Activated CD8-positive, alpha-beta T cell treated with anti-CD3 and anti-CD28 coated beads for 36 hours (primary cell): ENCODE measurements at regions of chr6 and their contacts with region 1.

Region 1: GRCh38 chr6:131532580-131533039 is 40.4 kb upstream of the ARG1 start:
- DNase-seq: peak; percentile 82
- ATAC-seq: peak; percentile 91
- H3K4me3 Mint-ChIP-seq: no peak overlapping the region
- H3K27ac Mint-ChIP-seq: peak overlapping the region; percentile 80
- H3K4me1 Mint-ChIP-seq: peaks cover 49% of the 10 kb centered on the region
- H3K27me3 Mint-ChIP-seq: no peaks in the 10 kb centered on the region
- CTCF ChIP-seq: no peak

Region 2: DNA sequence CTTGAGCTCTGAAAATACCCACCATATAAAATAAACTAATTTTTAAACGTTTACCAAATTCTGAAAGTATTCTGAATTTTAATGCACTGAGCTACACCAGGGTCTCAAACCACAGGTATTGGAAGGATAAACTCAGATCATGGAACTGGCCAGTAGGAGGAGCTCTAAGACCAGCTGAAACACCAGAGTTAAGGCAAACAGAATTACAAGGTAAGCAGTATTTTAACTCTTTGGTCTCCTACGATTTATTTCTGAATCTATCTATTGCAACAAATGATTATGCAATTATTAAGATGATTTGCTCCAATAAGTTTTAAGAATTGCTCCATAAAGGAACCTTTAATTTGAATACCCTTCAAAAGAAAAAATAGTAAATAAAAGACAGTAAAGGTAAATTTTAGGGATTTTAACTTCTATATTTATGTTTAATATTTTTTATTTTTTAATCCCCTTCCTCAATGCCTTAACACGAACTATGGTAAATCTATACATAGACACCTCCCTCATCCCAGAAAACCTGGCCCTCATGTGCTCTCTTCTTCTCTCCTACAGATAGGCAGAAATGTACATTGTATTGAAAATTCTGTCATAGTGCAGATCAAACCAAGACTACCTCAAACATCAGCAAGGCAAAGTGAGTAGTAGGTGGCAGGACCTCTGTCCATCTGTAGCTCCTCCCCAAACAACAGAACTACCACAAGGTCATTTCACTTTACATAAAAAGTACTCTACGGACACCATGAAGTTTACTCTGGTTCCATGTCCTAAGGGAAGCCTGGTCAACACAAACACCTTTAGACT is 647.0 kb before region 1 on chr6:
- CTCF ChIA-PET with region 1: interaction called, 19 read pairs
- POLR2A ChIA-PET with region 1: no interaction called
- intact Hi-C with region 1: loop called (anchors 5 kb)
- DNase-seq: peak; percentile 82
- ATAC-seq: peak; percentile 77
- H3K4me3 Mint-ChIP-seq: no peak overlapping the region
- H3K27ac Mint-ChIP-seq: no peak overlapping the region
- H3K4me1 Mint-ChIP-seq: no peaks in the 10 kb centered on the region
- H3K27me3 Mint-ChIP-seq: no peaks in the 10 kb centered on the region
- CTCF ChIP-seq: peak; percentile 96

Region 3: GRCh38 chr6:131116749-131117360 is 415.8 kb before region 1 on chr6:
- CTCF ChIA-PET with region 1: interaction called, 13 read pairs
- POLR2A ChIA-PET with region 1: no interaction called
- intact Hi-C with region 1: no loop called
- DNase-seq: no peak
- ATAC-seq: no peak
- H3K4me3 Mint-ChIP-seq: no peak overlapping the region
- H3K27ac Mint-ChIP-seq: no peak overlapping the region
- H3K4me1 Mint-ChIP-seq: no peaks in the 10 kb centered on the region
- H3K27me3 Mint-ChIP-seq: peaks cover 1% of the 10 kb centered on the region
- CTCF ChIP-seq: peak; percentile 72

Region 4: DNA sequence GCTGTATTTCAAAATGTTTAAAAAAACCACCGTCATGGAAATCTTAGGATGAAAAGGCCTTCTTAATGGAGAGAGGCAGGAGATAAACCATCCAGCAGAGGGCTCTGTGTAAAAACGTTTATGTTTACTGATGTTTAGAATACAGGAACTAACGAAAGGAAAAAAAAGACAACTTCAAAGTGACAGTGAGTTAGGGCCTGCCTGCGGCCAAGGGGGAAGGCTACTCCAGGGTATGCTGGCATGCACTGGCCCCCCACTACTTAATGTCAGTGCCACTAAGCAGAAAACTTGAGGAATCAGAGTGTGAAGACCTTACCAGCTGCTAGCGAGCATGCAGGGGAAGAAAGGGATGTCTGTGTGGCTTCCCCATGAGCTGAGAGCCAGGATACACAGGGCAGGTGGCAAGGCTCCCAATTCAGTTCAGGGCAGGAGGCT is 349.6 kb before region 1 on chr6:
- CTCF ChIA-PET with region 1: interaction called, 42 read pairs
- POLR2A ChIA-PET with region 1: interaction called, 3 read pairs
- intact Hi-C with region 1: loop called (anchors 1 kb)
- DNase-seq: peak; percentile 33
- ATAC-seq: peak; percentile 66
- H3K4me3 Mint-ChIP-seq: no peak overlapping the region
- H3K27ac Mint-ChIP-seq: peak overlapping the region; percentile 55
- H3K4me1 Mint-ChIP-seq: peaks cover 9% of the 10 kb centered on the region
- H3K27me3 Mint-ChIP-seq: no peaks in the 10 kb centered on the region
- CTCF ChIP-seq: peak; percentile 58

Region 5: GRCh38 chr6:131199568-131200272 is 332.9 kb before region 1 on chr6:
- CTCF ChIA-PET with region 1: interaction called, 86 read pairs
- POLR2A ChIA-PET with region 1: interaction called, 5 read pairs
- intact Hi-C with region 1: loop called (anchors 1 kb)
- DNase-seq: peak; percentile 85
- ATAC-seq: peak; percentile 98
- H3K4me3 Mint-ChIP-seq: peak overlapping the region; percentile 76
- H3K27ac Mint-ChIP-seq: peak overlapping the region; percentile 95
- H3K4me1 Mint-ChIP-seq: peaks cover 54% of the 10 kb centered on the region
- H3K27me3 Mint-ChIP-seq: no peaks in the 10 kb centered on the region
- CTCF ChIP-seq: peak; percentile 79

Region 6: GRCh38 chr6:131205481-131206244 is 326.9 kb before region 1 on chr6:
- CTCF ChIA-PET with region 1: interaction called, 86 read pairs
- POLR2A ChIA-PET with region 1: no interaction called
- intact Hi-C with region 1: no loop called
- DNase-seq: no peak
- ATAC-seq: no peak
- H3K4me3 Mint-ChIP-seq: no peak overlapping the region
- H3K27ac Mint-ChIP-seq: peak overlapping the region; percentile 32
- H3K4me1 Mint-ChIP-seq: peaks cover 50% of the 10 kb centered on the region
- H3K27me3 Mint-ChIP-seq: no peaks in the 10 kb centered on the region
- CTCF ChIP-seq: no peak

Region 7: GRCh38 chr6:131451321-131452144 is 81.1 kb before region 1 on chr6:
- CTCF ChIA-PET with region 1: no interaction called
- POLR2A ChIA-PET with region 1: no interaction called
- intact Hi-C with region 1: no loop called
- DNase-seq: peak; percentile 37
- ATAC-seq: peak; percentile 90
- H3K4me3 Mint-ChIP-seq: no peak overlapping the region
- H3K27ac Mint-ChIP-seq: peak overlapping the region; percentile 89
- H3K4me1 Mint-ChIP-seq: peaks cover 25% of the 10 kb centered on the region
- H3K27me3 Mint-ChIP-seq: no peaks in the 10 kb centered on the region
- CTCF ChIP-seq: no peak

Region 8: DNA sequence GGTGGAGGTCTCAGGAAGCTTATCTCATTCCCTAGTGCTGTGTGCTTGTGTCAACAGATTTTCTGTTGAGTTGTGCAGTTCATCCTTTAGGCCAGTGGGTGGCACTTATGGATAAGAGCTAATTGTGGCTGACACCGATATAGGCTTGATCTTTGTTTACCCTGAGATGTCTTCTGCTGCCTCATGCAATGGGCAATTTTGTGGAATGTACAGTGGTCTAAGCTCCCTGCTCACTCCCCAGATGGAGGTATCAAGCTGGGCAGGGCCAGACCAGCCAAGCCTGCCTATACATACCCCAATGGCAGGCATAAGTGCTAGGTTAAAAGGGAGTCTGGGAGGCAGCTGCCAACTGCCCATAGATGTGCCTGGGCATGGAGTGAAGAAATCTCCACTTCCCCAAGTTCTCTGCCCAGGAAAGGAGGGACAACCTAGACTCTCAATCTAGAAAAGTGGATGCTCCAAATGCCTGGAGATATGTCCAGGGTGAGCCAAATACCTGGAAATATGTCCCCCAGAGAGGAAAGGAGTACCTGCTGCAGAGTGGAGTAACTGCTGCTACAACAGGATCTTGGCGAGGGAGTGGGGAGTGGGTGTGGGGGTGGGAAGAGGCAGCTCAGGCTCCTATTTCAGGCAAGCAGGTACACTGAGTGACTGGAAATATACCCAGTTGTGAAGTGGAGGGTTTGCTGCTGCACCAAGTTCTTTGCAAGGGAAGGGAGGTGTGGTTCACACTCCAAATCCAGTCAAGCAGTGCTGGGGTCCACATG is 12.8 kb before region 1 on chr6:
- CTCF ChIA-PET with region 1: interaction called, 83 read pairs
- POLR2A ChIA-PET with region 1: interaction called, 5 read pairs
- intact Hi-C with region 1: loop called (anchors 1 kb)
- DNase-seq: peak; percentile 72
- ATAC-seq: peak; percentile 99
- H3K4me3 Mint-ChIP-seq: no peak overlapping the region
- H3K27ac Mint-ChIP-seq: no peak overlapping the region
- H3K4me1 Mint-ChIP-seq: peaks cover 16% of the 10 kb centered on the region
- H3K27me3 Mint-ChIP-seq: no peaks in the 10 kb centered on the region
- CTCF ChIP-seq: peak; percentile 61

Region 9: DNA sequence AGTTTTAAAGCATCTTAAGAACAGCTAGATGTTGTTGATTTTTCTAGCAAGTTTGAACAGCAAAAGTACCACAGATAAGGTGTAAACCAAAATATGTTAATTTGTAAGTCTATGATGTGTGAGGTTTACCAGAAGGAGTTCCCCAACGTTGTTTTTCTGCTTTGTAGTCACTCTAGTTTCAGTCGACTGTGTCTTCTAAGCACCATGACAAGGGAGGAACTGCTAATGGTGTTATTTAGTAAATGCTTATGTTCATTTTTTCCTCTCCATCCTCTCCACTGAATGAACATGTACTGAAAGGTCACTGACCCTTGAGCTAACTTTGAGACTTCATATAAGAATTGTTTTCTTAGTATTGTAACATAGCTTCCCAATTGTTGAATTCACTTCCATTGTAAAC is 107.5 kb after region 1 on chr6:
- CTCF ChIA-PET with region 1: no interaction called
- POLR2A ChIA-PET with region 1: no interaction called
- intact Hi-C with region 1: no loop called
- DNase-seq: no peak
- ATAC-seq: peak; percentile 94
- H3K4me3 Mint-ChIP-seq: no peak overlapping the region
- H3K27ac Mint-ChIP-seq: no peak overlapping the region
- H3K4me1 Mint-ChIP-seq: peaks cover 2% of the 10 kb centered on the region
- H3K27me3 Mint-ChIP-seq: no peaks in the 10 kb centered on the region
- CTCF ChIP-seq: no peak